ENCODE measurements at regions of chr10 and their contacts with region 1.

Region 1: DNA sequence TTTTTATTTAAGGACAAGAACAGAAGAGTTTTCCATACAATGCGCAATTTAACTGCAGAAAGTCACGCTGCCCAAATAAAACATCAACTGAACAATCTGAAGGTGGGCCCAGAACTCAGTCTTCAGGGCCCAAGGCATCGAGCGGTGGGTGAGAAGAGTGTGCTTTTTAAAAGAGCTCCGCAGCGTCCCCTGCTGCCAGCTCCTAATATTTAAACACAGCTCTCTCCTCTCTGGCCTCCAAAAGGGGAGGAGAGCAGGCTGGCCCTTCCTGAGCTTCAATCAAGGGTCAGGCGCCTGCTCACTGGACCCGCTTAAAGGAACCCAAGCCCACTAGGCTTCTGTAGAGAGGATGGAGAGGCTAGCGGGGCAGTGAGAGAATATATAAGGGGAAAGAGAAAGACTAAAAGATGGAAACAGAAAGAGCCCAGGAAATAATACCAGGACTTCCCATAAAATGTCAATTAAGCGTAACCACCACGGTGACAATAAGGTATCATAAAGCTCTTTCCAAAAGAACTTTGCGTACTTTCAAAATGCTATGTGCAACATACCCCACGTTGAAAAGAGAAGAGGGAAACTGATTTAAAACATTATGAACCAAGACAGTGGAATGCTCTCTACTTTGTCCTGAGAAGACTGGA is 2.8 kb downstream of the FAM53B start:
- DNase-seq: peak; percentile 86
- ATAC-seq: peak; percentile 51
- H3K4me3 ChIP-seq: peak overlapping the region; percentile 66 to 92 (median 78)
- H3K4me3 Mint-ChIP-seq: peak overlapping the region; percentile 93
- H3K27ac ChIP-seq: peak overlapping the region; percentile 79 to 98
- H3K27ac Mint-ChIP-seq: peak overlapping the region; percentile 98
- H3K4me1 ChIP-seq: peaks cover 60 to 73% of the 10 kb centered on the region in 2 donors
- H3K4me1 Mint-ChIP-seq: peaks cover 73% of the 10 kb centered on the region
- H3K27me3 ChIP-seq: no peaks in the 10 kb centered on the region
- H3K27me3 Mint-ChIP-seq: no peaks in the 10 kb centered on the region
- CTCF ChIP-seq: peak; percentile 95

Region 2: GRCh38 chr10:123994417-123995081 is 746.9 kb before region 1 on chr10:
- CTCF ChIA-PET with region 1: interaction called, 52 read pairs
- POLR2A ChIA-PET with region 1: no interaction called
- intact Hi-C with region 1: no loop called
- DNase-seq: peak; percentile 87
- ATAC-seq: peak; percentile 82
- H3K4me3 ChIP-seq: peak overlapping the region; percentile 2 to 65 (median 30)
- H3K4me3 Mint-ChIP-seq: peak overlapping the region; percentile 84
- H3K27ac ChIP-seq: no peak overlapping the region
- H3K27ac Mint-ChIP-seq: peak overlapping the region; percentile 55
- H3K4me1 ChIP-seq: peaks cover 29 to 36% of the 10 kb centered on the region in 2 donors
- H3K4me1 Mint-ChIP-seq: peaks cover 40% of the 10 kb centered on the region
- H3K27me3 ChIP-seq: peaks cover 0 to 34% (median 20%) of the 10 kb centered on the region in 4 experiments
- H3K27me3 Mint-ChIP-seq: peaks cover 38% of the 10 kb centered on the region
- CTCF ChIP-seq: peak; percentile 99

Region 3: GRCh38 chr10:124461438-124462347 is 279.7 kb before region 1 on chr10 and contains the start of gene LHPP:
- CTCF ChIA-PET with region 1: interaction called, 5 read pairs
- POLR2A ChIA-PET with region 1: no interaction called
- intact Hi-C with region 1: loop called (anchors 5 kb)
- DNase-seq: peak; percentile 93
- ATAC-seq: peak; percentile 91
- H3K4me3 ChIP-seq: peak within 1 kb of the TSS in 4 of 5 experiments; percentile 43 to 71 (median 65)
- H3K4me3 Mint-ChIP-seq: peak within 1 kb of the TSS; percentile 97
- H3K27ac ChIP-seq: peak within 1 kb of the TSS; percentile 54 to 71
- H3K27ac Mint-ChIP-seq: peak within 1 kb of the TSS; percentile 98
- H3K4me1 ChIP-seq: peaks cover 23 to 35% of the 10 kb centered on the region in 2 donors
- H3K4me1 Mint-ChIP-seq: peaks cover 30% of the 10 kb centered on the region
- H3K27me3 ChIP-seq: peaks cover 0 to 3% (median under 1%) of the 10 kb centered on the region in 4 experiments
- H3K27me3 Mint-ChIP-seq: peaks cover 7% of the 10 kb centered on the region
- CTCF ChIP-seq: peak; percentile 35
- total RNA-seq, gene LHPP: 82.4 and 83.5 TPM in 2 replicates

Region 4: DNA sequence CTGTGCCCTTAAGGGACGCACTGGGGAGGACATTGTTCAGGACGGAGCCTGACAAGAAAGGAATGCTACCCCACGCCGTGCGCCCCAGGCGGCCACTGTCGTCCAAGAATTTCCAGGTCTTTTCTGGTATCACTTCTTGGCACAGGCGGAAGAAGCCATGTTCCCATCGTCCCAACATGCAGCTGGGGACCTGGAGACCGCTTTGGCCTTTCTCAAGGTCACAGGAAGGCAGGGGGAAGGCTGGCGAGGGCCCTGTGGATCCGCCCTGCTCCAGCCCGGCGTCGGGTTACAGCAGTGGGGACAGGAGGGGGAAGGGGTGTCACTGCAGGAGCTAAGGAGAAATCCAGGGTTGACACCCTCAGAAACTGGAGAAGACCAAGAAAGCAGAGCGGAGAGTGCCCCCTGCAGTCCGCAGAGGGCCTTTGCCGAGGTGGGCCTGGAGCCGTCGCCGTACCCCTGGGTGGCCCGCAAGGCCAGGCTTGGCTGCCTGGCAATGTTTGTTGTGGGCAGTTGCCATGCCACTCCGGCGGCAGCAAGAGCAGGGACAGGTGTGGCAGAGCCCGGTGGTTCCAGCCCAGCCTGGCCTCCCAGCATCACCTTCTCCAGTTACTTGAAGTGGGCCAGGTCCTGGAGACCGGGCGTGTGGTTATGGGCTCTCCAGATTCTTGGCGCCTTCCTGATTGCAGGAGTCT is 175.7 kb before region 1 on chr10:
- CTCF ChIA-PET with region 1: interaction called, 13 read pairs
- POLR2A ChIA-PET with region 1: no interaction called
- intact Hi-C with region 1: no loop called
- DNase-seq: peak; percentile 49
- ATAC-seq: peak; percentile 45
- H3K4me3 ChIP-seq: no peak overlapping the region
- H3K4me3 Mint-ChIP-seq: no peak overlapping the region
- H3K27ac ChIP-seq: no peak overlapping the region
- H3K27ac Mint-ChIP-seq: no peak overlapping the region
- H3K4me1 ChIP-seq: peaks cover 35 to 40% of the 10 kb centered on the region in 2 donors
- H3K4me1 Mint-ChIP-seq: peaks cover 51% of the 10 kb centered on the region
- H3K27me3 ChIP-seq: no peaks in the 10 kb centered on the region
- H3K27me3 Mint-ChIP-seq: no peaks in the 10 kb centered on the region
- CTCF ChIP-seq: no peak

Region 5: GRCh38 chr10:124632064-124632531 is 109.3 kb before region 1 on chr10:
- CTCF ChIA-PET with region 1: interaction called, 77 read pairs
- POLR2A ChIA-PET with region 1: interaction called, 19 read pairs
- intact Hi-C with region 1: loop called (anchors 2 kb)
- DNase-seq: peak; percentile 37
- ATAC-seq: no peak
- H3K4me3 ChIP-seq: no peak overlapping the region
- H3K4me3 Mint-ChIP-seq: peak overlapping the region; percentile 7
- H3K27ac ChIP-seq: peak overlapping the region; percentile 28 to 97
- H3K27ac Mint-ChIP-seq: peak overlapping the region; percentile 99
- H3K4me1 ChIP-seq: peaks cover 86 to 92% of the 10 kb centered on the region in 2 donors
- H3K4me1 Mint-ChIP-seq: peaks cover 88% of the 10 kb centered on the region
- H3K27me3 ChIP-seq: no peaks in the 10 kb centered on the region
- H3K27me3 Mint-ChIP-seq: no peaks in the 10 kb centered on the region
- CTCF ChIP-seq: no peak

Region 6: GRCh38 chr10:124688889-124689670 is 52.3 kb before region 1 on chr10:
- CTCF ChIA-PET with region 1: interaction called, 29 read pairs
- POLR2A ChIA-PET with region 1: interaction called, 3 read pairs
- intact Hi-C with region 1: loop called (anchors 2 kb)
- DNase-seq: no peak
- ATAC-seq: no peak
- H3K4me3 ChIP-seq: no peak overlapping the region
- H3K4me3 Mint-ChIP-seq: no peak overlapping the region
- H3K27ac ChIP-seq: peak overlapping the region in 1 of 2 donors; percentile 76
- H3K27ac Mint-ChIP-seq: peak overlapping the region; percentile 79
- H3K4me1 ChIP-seq: peaks cover 65 to 76% of the 10 kb centered on the region in 2 donors
- H3K4me1 Mint-ChIP-seq: peaks cover 77% of the 10 kb centered on the region
- H3K27me3 ChIP-seq: no peaks in the 10 kb centered on the region
- H3K27me3 Mint-ChIP-seq: no peaks in the 10 kb centered on the region
- CTCF ChIP-seq: no peak

Region 7: GRCh38 chr10:124791378-124792348 is 50.3 kb after region 1 on chr10 and contains the start of gene EEF1AKMT2:
- CTCF ChIA-PET with region 1: interaction called, 4 read pairs
- POLR2A ChIA-PET with region 1: no interaction called
- intact Hi-C with region 1: loop called (anchors 1 kb)
- DNase-seq: peak; percentile 91
- ATAC-seq: peak; percentile 97
- H3K4me3 ChIP-seq: peak within 1 kb of the TSS; percentile 75 to 98 (median 95)
- H3K4me3 Mint-ChIP-seq: peak within 1 kb of the TSS; percentile 100
- H3K27ac ChIP-seq: peak within 1 kb of the TSS; percentile 68 to 79
- H3K27ac Mint-ChIP-seq: peak within 1 kb of the TSS; percentile 99
- H3K4me1 ChIP-seq: peaks cover 4 to 10% of the 10 kb centered on the region in 2 donors
- H3K4me1 Mint-ChIP-seq: peaks cover 17% of the 10 kb centered on the region
- H3K27me3 ChIP-seq: no peaks in the 10 kb centered on the region
- H3K27me3 Mint-ChIP-seq: no peaks in the 10 kb centered on the region
- CTCF ChIP-seq: peak; percentile 18
- total RNA-seq, gene EEF1AKMT2: 15.0 and 15.4 TPM in 2 replicates

Region 8: GRCh38 chr10:124906551-124907001 is 165.2 kb after region 1 on chr10:
- CTCF ChIA-PET with region 1: no interaction called
- POLR2A ChIA-PET with region 1: no interaction called
- intact Hi-C with region 1: no loop called
- DNase-seq: no peak
- ATAC-seq: no peak
- H3K4me3 ChIP-seq: no peak overlapping the region
- H3K4me3 Mint-ChIP-seq: no peak overlapping the region
- H3K27ac ChIP-seq: no peak overlapping the region
- H3K27ac Mint-ChIP-seq: no peak overlapping the region
- H3K4me1 ChIP-seq: no peaks in the 10 kb centered on the region
- H3K4me1 Mint-ChIP-seq: no peaks in the 10 kb centered on the region
- H3K27me3 ChIP-seq: peaks cover 0 to 5% (median 2%) of the 10 kb centered on the region in 4 experiments
- H3K27me3 Mint-ChIP-seq: peaks cover 29% of the 10 kb centered on the region
- CTCF ChIP-seq: no peak